Caco-2 (cell line): ENCODE measurements at regions of chr6 and their contacts with region 1.

Region 1: GRCh38 chr6:138692058-138692977 is 81.3 kb upstream of the CCDC28A start:
- DNase-seq: peak; percentile 55 to 83
- H3K4me3 ChIP-seq: peak overlapping the region; percentile 84
- H3K4me3 Mint-ChIP-seq: peak overlapping the region; percentile 73
- H3K27ac Mint-ChIP-seq: peak overlapping the region; percentile 63
- H3K4me1 ChIP-seq: no peaks in the 10 kb centered on the region
- H3K4me1 Mint-ChIP-seq: no peaks in the 10 kb centered on the region
- H3K27me3 ChIP-seq: no peaks in the 10 kb centered on the region
- H3K27me3 Mint-ChIP-seq: no peaks in the 10 kb centered on the region
- CTCF ChIP-seq: peak; percentile 61 to 85

Region 2: DNA sequence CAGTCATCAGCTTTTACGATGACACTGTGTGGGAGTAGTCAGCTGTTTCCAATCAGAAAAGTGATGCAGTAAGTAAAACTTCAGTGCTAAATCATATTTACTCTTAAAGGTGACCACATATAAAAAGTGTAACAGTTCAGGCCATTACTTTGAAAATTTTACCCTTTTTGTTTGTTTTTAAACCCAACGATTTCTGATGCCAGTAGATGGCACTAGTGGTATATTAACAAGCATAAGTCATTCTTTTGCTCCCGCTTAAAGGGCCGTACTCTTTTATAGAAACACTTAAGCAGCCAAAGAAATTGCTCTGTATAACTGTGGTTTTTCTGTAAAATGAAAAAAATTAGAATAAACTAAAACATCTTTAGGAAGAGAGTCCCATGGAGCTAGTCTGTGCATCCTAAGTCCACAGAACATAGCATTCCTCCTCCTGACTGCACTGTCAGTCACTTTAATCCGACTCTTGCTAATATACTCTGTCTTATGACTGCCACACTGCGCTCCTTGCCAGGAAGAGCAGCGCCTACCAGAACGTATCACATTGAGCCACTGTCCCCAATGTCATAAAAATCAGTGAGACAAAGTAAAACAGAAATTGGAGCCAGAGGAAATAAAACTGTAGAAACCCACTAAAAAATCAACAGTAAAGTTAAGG is 263.2 kb before region 1 on chr6:
- CTCF ChIA-PET with region 1: no interaction called
- POLR2A ChIA-PET with region 1: no interaction called
- intact Hi-C with region 1: loop called (anchors 2 kb)
- DNase-seq: peak in 1 of 2 experiments; percentile 45
- H3K4me3 ChIP-seq: no peak overlapping the region
- H3K4me3 Mint-ChIP-seq: no peak overlapping the region
- H3K27ac Mint-ChIP-seq: no peak overlapping the region
- H3K4me1 ChIP-seq: no peaks in the 10 kb centered on the region
- H3K4me1 Mint-ChIP-seq: peaks cover 5% of the 10 kb centered on the region
- H3K27me3 ChIP-seq: no peaks in the 10 kb centered on the region
- H3K27me3 Mint-ChIP-seq: no peaks in the 10 kb centered on the region
- CTCF ChIP-seq: peak; percentile 59 to 65

Region 3: DNA sequence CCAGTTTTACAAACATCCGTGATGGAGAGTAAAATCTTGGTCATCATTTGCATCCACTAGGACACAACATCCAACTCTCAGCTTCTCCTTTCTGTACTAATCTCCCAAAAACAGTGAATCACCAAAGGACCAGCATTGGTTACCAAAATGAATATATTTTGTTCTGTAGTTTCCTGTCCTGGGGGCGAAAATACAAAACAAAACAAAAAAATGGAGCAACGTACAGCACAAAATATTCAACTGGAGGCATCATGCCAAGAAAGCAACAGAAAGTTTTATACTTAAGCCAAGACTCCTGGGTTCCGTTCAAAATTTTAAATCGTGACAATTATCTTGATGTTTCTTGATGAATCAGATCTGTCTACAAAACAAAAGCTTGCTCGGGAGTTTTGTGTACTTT is 45.3 kb before region 1 on chr6:
- CTCF ChIA-PET with region 1: no interaction called
- POLR2A ChIA-PET with region 1: no interaction called
- intact Hi-C with region 1: loop called (anchors 5 kb)
- DNase-seq: no peak
- H3K4me3 ChIP-seq: no peak overlapping the region
- H3K4me3 Mint-ChIP-seq: no peak overlapping the region
- H3K27ac Mint-ChIP-seq: no peak overlapping the region
- H3K4me1 ChIP-seq: peaks cover 18% of the 10 kb centered on the region
- H3K4me1 Mint-ChIP-seq: peaks cover 21% of the 10 kb centered on the region
- H3K27me3 ChIP-seq: no peaks in the 10 kb centered on the region
- H3K27me3 Mint-ChIP-seq: no peaks in the 10 kb centered on the region
- CTCF ChIP-seq: no peak

Region 4: DNA sequence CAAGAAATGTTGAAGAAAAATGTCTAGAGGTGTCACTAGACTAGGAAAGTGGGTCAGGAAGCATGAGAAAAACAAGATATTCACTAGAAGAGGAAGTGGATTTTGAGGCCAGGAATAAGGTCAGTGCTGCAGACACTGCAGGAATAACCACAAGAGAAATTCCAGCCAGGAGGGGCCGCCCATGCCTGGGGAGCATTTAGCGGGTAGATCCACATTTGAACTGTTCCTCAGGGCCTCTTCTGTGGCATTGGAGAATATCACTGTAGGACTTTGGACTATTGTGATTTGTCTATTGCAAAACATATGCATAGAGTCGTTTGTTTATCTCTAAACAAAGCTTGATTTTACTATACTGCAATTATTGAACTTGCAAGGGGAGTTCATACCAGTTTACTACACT is 31.7 kb after region 1 on chr6:
- CTCF ChIA-PET with region 1: interaction called, 4 read pairs
- POLR2A ChIA-PET with region 1: no interaction called
- intact Hi-C with region 1: loop called (anchors 1 kb)
- DNase-seq: peak; percentile 67 to 75
- H3K4me3 ChIP-seq: no peak overlapping the region
- H3K4me3 Mint-ChIP-seq: peak overlapping the region; percentile 7
- H3K27ac Mint-ChIP-seq: no peak overlapping the region
- H3K4me1 ChIP-seq: peaks cover 32% of the 10 kb centered on the region
- H3K4me1 Mint-ChIP-seq: peaks cover 15% of the 10 kb centered on the region
- H3K27me3 ChIP-seq: no peaks in the 10 kb centered on the region
- H3K27me3 Mint-ChIP-seq: no peaks in the 10 kb centered on the region
- CTCF ChIP-seq: peak in 1 of 2 experiments; percentile 34

Region 5: GRCh38 chr6:138765896-138766655 is 73.8 kb after region 1 on chr6:
- CTCF ChIA-PET with region 1: interaction called, 4 read pairs
- POLR2A ChIA-PET with region 1: no interaction called
- intact Hi-C with region 1: loop called (anchors 1 kb)
- DNase-seq: peak in 1 of 2 experiments; percentile 25
- H3K4me3 ChIP-seq: no peak overlapping the region
- H3K4me3 Mint-ChIP-seq: no peak overlapping the region
- H3K27ac Mint-ChIP-seq: no peak overlapping the region
- H3K4me1 ChIP-seq: no peaks in the 10 kb centered on the region
- H3K4me1 Mint-ChIP-seq: no peaks in the 10 kb centered on the region
- H3K27me3 ChIP-seq: no peaks in the 10 kb centered on the region
- H3K27me3 Mint-ChIP-seq: no peaks in the 10 kb centered on the region
- CTCF ChIP-seq: peak; percentile 40 to 49

Region 6: GRCh38 chr6:138795809-138796603 is 103.7 kb after region 1 on chr6 and contains the start of gene ECT2L:
- CTCF ChIA-PET with region 1: no interaction called
- POLR2A ChIA-PET with region 1: no interaction called
- intact Hi-C with region 1: no loop called
- DNase-seq: peak; percentile 57 to 61
- H3K4me3 ChIP-seq: peak within 1 kb of the TSS; percentile 16
- H3K4me3 Mint-ChIP-seq: peak within 1 kb of the TSS; percentile 40
- H3K27ac Mint-ChIP-seq: no peak within 1 kb of the TSS
- H3K4me1 ChIP-seq: no peaks in the 10 kb centered on the region
- H3K4me1 Mint-ChIP-seq: no peaks in the 10 kb centered on the region
- H3K27me3 ChIP-seq: no peaks in the 10 kb centered on the region
- H3K27me3 Mint-ChIP-seq: no peaks in the 10 kb centered on the region
- CTCF ChIP-seq: no peak
- total RNA-seq, gene ECT2L: not detected in 2 replicates

Region 7: DNA sequence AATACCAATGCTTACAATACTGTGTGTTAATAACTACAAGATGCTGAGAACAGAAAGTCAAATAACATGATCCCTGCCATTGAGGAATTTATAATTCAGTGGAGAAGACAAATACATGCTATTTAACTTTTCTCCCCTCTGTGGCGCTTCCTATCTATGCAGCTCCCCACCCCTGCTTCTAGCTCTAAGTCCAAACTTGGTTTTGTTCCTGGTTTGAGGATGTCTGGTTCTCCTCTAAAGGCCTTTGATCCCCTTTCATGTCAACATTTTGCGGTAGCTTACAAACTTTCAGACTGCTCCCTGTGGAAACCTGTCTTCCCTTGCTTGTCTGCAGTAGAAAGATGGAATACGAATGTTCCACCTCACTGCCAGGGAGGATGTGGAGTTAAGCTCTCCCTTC is 314.2 kb after region 1 on chr6:
- CTCF ChIA-PET with region 1: no interaction called
- POLR2A ChIA-PET with region 1: no interaction called
- intact Hi-C with region 1: no loop called
- DNase-seq: no peak
- H3K4me3 ChIP-seq: no peak overlapping the region
- H3K4me3 Mint-ChIP-seq: no peak overlapping the region
- H3K27ac Mint-ChIP-seq: no peak overlapping the region
- H3K4me1 ChIP-seq: 0 out of 2 replicates have a peak, but pooled peaks cover 10% of the 10 kb centered on the region
- H3K4me1 Mint-ChIP-seq: peaks cover 6% of the 10 kb centered on the region
- H3K27me3 ChIP-seq: no peaks in the 10 kb centered on the region
- H3K27me3 Mint-ChIP-seq: no peaks in the 10 kb centered on the region
- CTCF ChIP-seq: no peak

Region 8: DNA sequence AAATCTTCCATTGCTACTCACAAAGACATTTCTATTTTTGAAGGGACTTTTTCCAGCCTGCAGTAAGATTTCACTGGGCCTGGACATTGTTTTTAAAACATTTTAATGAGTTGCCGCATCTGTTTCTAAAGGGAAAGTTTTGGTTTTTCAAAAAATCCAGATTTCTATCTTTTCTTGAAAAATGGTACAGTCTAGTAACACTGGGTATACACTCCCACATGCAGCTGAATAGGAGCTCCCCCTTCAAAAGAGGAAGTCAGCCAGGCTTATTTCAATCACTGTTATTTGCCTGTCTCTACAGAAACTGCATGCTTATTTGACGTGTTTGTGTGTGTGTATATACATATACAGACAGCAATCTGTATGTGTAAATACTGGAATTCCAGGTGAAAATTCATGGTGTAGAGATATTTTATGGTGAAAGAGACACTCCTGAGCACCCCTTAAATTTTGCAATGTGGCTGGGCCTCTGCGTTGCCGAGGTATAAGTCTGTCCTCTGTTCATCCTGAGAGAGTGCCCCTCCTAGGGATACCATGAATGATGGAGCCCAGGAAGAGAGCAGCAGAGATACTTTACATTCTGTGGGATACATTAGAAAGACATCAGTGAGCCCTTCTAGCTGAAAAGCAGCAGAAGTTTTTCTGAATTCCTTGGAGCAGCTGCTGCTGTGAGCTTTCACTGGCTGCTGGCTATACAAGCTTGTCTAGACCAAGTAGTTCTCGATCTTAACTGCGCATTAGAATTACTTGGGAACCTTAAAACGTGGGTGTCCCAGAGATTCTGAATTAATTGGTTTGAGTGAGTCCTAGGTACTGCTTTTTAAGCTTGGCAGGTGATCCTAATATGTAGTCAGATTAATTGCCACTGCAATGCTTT is 324.3 kb after region 1 on chr6:
- CTCF ChIA-PET with region 1: no interaction called
- POLR2A ChIA-PET with region 1: no interaction called
- intact Hi-C with region 1: no loop called
- DNase-seq: no peak
- H3K4me3 ChIP-seq: no peak overlapping the region
- H3K4me3 Mint-ChIP-seq: no peak overlapping the region
- H3K27ac Mint-ChIP-seq: no peak overlapping the region
- H3K4me1 ChIP-seq: 0 out of 2 replicates have a peak, but pooled peaks cover 4% of the 10 kb centered on the region
- H3K4me1 Mint-ChIP-seq: peaks cover 27% of the 10 kb centered on the region
- H3K27me3 ChIP-seq: no peaks in the 10 kb centered on the region
- H3K27me3 Mint-ChIP-seq: no peaks in the 10 kb centered on the region
- CTCF ChIP-seq: no peak